Ovary (tissue), 10 donors: ENCODE measurements at regions of chr16 and their contacts with region 1.

Region 1: DNA sequence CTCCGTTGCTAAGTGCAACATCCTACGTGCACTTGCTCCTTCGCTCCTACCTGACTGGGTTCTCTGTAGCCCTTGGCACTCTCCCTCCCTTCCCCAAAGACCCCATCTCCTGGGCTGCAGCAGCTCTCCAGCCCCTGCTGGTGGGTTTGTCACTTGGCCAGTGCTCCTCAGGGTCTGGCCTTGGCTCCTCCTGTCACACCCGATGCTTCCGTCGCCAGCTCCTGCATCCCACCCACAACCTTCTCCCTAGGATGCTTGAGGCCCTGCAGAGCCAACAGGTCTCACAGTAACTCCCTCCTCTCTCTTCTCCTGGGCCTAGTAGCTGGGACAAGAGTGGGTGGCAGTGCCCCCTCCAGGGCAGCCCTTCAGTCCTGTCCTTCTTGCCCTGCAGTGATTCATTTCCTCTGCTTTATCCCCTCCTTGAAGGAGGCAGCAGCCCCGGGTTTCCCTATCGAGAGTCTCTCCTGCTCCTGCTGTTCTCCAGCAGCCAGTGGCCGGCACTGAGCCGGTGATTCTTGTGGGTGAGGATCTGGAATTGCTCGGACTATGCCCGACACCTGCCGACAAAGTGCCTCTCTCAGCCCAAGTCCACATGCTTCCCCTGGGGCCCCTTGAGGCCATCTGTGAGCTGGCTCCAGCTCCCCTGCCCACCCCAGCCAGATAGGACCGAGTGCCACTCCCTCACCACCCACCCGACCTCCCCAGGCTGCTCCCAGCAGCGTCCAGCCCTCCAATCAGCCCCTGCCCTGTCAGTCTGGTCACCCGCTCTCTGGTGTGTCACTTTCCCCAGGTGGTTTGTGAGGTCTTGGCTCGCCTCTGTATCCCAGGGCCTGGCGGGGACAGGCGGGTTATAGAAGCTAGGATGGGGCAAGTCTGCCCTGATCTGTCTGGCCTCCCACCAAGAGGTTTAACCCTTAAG is 3.8 kb downstream of the LITAFD start:
- DNase-seq: peak in 2 of 5 donors; percentile 16 to 36
- H3K4me3 ChIP-seq: no peak overlapping the region
- H3K27ac ChIP-seq: no peak overlapping the region
- H3K4me1 ChIP-seq: no peaks in the 10 kb centered on the region
- H3K27me3 ChIP-seq: no peaks in the 10 kb centered on the region
- CTCF ChIP-seq: no peak
- EP300 ChIP-seq: no peak
- POLR2A ChIP-seq: no peak

Region 2: DNA sequence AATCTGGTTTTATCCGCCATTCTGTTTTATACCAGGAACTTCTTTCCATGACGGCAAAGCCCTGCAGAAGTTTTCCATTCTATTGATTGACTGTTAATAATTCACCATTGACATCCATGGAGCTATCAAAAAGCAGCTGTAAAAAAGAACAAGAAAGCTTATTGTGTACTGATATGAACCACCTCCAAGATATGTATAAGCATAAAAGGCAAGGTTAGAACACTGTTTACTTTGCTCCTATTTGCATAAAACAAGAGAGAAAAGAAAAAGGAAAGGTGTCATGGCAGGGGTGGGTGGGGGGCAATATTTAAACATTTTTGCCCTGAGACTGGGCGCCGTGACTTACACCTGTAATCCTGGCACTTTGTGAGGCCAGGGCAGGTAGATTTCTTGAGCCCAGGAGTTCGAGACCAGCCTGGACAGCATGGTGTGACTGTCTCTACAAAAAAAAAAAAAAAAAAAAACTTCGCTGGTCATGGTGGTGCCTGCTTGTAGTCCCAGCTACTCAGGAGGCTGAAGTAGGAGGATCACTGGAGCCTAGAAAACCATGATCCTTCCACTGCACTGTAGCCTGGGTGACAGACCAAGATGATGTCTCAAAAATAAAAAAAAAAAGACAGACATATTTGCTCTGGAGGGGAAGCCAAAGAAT is 348.1 kb before region 1 on chr16:
- intact Hi-C with region 1: no loop called
- DNase-seq: no peak
- H3K4me3 ChIP-seq: no peak overlapping the region
- H3K27ac ChIP-seq: no peak overlapping the region
- H3K4me1 ChIP-seq: no peaks in the 10 kb centered on the region
- H3K27me3 ChIP-seq: no peaks in the 10 kb centered on the region
- CTCF ChIP-seq: no peak
- EP300 ChIP-seq: no peak
- POLR2A ChIP-seq: no peak

Region 3: GRCh38 chr16:8567750-8568617 is 317.9 kb before region 1 on chr16:
- intact Hi-C with region 1: loop called in 3 of 4 experiments (anchors 5 to 10 kb)
- DNase-seq: peak; percentile 47 to 79 (median 75)
- H3K4me3 ChIP-seq: no peak overlapping the region
- H3K27ac ChIP-seq: no peak overlapping the region
- H3K4me1 ChIP-seq: no peaks in the 10 kb centered on the region
- H3K27me3 ChIP-seq: no peaks in the 10 kb centered on the region
- CTCF ChIP-seq: peak; percentile 82 to 94 (median 91)
- EP300 ChIP-seq: no peak
- POLR2A ChIP-seq: no peak

Region 4: DNA sequence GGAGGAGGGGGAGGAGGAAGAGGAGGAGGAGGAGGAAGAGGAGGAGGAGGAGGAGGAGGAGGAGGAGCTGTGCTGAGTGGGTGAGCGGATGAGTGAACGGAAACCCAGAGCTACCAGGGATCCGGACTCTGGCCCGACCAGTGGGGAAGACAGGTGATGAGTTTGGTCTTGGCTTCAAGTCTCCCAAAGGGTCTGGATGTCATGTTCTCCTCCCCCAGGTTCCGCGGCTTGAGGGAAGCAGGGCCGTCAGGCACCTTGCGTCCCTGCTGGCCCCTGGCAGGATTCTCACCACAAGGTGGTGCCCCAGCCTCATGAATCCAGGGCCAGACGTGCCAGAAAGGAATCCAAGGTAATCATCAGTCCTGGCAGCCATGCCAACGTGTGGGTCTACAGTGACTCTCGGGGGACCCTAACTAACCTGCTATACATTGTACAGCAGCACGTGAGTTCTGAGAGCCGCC is 225.1 kb before region 1 on chr16:
- intact Hi-C with region 1: loop called (anchors 2 to 5 kb)
- DNase-seq: peak; percentile 32 to 78 (median 62)
- H3K4me3 ChIP-seq: no peak overlapping the region
- H3K27ac ChIP-seq: no peak overlapping the region
- H3K4me1 ChIP-seq: no peaks in the 10 kb centered on the region
- H3K27me3 ChIP-seq: no peaks in the 10 kb centered on the region
- CTCF ChIP-seq: peak; percentile 31 to 53 (median 48)
- EP300 ChIP-seq: no peak
- POLR2A ChIP-seq: no peak

Region 5: DNA sequence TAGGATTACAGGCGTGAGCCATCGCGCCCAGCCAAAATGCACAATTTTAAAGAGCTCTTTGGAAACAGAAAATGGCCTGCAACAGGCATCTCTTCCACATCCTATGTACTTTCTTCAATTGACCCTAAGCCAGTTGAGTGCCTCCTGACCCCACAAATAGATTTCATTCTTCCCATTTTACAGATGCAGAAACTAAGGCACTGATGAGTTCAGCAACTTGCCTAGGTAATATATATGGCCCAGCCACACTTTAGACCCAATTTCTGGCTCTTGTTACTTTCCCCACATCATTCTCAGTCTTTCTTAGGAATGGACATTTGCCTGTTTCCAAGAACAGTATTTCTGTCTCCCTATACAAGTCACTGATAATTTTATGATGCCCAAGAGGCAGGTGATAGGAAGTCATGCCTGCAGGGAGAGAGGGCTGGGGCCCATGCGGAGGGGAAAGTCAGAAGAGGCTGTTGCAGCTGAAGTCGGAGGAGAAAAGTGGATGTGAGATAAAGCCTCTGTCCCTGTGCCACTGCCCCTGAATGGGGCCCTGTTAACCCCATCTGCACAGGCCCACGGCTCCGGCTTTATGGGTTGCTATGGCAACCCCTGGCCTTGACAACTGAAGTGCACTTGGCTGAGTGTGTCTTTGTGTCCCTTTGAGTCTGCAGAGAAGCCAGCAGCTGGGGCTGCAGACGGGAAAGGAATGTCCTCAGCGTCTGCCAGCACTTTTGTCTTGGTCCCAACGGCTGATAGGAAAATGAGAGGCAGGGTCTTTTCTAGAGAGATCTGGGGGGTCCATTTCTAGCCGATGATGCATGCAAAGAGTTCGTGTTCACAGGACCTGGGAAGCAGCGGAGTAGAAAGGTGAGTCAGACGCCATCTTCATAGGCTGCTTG is 165.6 kb before region 1 on chr16:
- intact Hi-C with region 1: no loop called
- DNase-seq: no peak
- H3K4me3 ChIP-seq: no peak overlapping the region
- H3K27ac ChIP-seq: no peak overlapping the region
- H3K4me1 ChIP-seq: peaks cover 3% of the 10 kb centered on the region
- H3K27me3 ChIP-seq: no peaks in the 10 kb centered on the region
- CTCF ChIP-seq: no peak
- EP300 ChIP-seq: no peak
- POLR2A ChIP-seq: no peak

Region 6: DNA sequence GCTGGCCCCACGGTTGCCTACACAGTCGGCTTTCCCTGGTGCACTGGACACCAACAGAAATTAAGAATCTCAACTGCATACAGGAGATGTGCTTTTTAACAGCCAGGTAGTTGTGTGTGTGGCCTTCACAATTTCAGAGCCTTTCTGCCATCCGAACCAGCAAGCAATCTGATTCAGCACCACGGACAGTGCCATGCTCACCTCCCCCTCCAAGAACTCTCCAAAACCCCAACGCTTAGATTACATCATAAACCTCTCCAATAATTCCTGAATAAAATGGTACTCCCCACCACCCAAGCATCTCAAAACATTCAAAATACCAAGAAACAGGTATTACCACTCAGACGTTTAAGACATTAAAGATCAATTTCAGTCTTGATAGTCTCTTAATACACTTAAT is 45.9 kb after region 1 on chr16:
- intact Hi-C with region 1: no loop called
- DNase-seq: peak; percentile 54 to 78 (median 68)
- H3K4me3 ChIP-seq: no peak overlapping the region
- H3K27ac ChIP-seq: no peak overlapping the region
- H3K4me1 ChIP-seq: peaks cover 13% of the 10 kb centered on the region
- H3K27me3 ChIP-seq: no peaks in the 10 kb centered on the region
- CTCF ChIP-seq: no peak
- EP300 ChIP-seq: no peak
- POLR2A ChIP-seq: no peak

Region 7: GRCh38 chr16:9199311-9199710 is 313.4 kb after region 1 on chr16:
- intact Hi-C with region 1: no loop called
- DNase-seq: no peak
- H3K4me3 ChIP-seq: no peak overlapping the region
- H3K27ac ChIP-seq: no peak overlapping the region
- H3K4me1 ChIP-seq: no peaks in the 10 kb centered on the region
- H3K27me3 ChIP-seq: no peaks in the 10 kb centered on the region
- CTCF ChIP-seq: no peak
- EP300 ChIP-seq: no peak
- POLR2A ChIP-seq: no peak